Spleen (tissue), 13 donors: ENCODE measurements at regions of chr20 and their contacts with region 1.

Region 1: GRCh38 chr20:59850018-59850641 is 83.3 kb downstream of the SYCP2 start:
- DNase-seq: no peak
- H3K4me3 ChIP-seq: no peak overlapping the region
- H3K27ac ChIP-seq: no peak overlapping the region
- H3K4me1 ChIP-seq: no peaks in the 10 kb centered on the region
- H3K27me3 ChIP-seq: no peaks in the 10 kb centered on the region
- CTCF ChIP-seq: peak in 10 of 11 experiments; percentile 16 to 78 (median 58)
- POLR2A ChIP-seq: no peak

Region 2: DNA sequence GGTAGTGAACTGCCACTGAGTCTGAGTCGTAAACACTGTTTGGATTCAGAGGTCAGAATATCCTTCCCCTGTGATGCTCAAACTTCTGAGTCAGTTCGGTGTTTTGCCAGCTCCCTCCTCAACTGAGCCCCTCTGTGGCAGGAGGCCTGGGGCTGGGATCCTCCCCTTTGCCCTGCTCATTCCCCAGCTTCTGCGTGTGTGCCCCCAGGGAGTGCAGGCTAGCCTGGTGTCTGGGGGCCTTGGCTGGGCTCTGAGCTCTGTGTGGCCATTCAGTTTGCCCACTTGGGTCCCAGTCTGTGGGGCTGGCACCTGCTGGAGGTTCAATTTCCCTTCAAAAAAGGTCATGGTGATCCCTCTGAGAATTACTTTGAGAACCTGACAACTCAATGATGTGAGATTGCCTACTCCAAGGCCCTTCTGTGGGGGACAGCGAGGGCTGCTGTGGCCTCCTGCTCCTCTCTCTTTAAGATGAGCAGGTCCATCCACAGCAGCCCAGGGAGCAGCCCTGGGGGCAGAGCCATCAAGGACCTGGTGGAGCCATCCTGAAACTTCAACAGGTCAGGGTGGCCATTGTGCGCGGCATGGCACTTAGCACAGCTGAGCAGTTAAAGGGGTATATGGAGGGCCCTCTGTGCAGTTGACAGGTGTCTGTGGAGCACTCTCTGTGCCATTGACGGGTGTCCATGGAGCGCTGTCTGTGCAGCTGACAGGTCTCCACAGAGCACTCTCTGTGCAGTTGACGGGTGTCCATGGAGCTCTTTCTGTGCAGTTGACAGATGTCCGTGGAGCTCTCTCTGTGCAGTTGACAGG is 63.9 kb before region 1 on chr20:
- intact Hi-C with region 1: loop called (anchors 5 kb)
- DNase-seq: no peak
- H3K4me3 ChIP-seq: no peak overlapping the region
- H3K27ac ChIP-seq: no peak overlapping the region
- H3K4me1 ChIP-seq: no peaks in the 10 kb centered on the region
- H3K27me3 ChIP-seq: peaks cover 0 to 5% (median 0%) of the 10 kb centered on the region in 7 donors
- CTCF ChIP-seq: no peak
- POLR2A ChIP-seq: no peak